HepG2 (cell line): ENCODE measurements at regions of chr18 and their contacts with region 1.

Region 1: GRCh38 chr18:21740724-21741510 is at the start of gene MIB1:
- DNase-seq: no peak
- ATAC-seq: peak; percentile 86
- H3K4me3 ChIP-seq: peak within 1 kb of the TSS; percentile 93 to 98 (median 94)
- H3K27ac ChIP-seq: peak within 1 kb of the TSS; percentile 97
- H3K4me1 ChIP-seq: peaks cover 47% of the 10 kb centered on the region
- H3K27me3 ChIP-seq: no peaks in the 10 kb centered on the region
- CTCF ChIP-seq: no peak
- EP300 ChIP-seq: no peak
- POLR2A ChIP-seq: peak; percentile 55 to 70
- RAD21 ChIP-seq: no peak
- total RNA-seq, gene MIB1: 47.0 and 60.6 TPM in 2 replicates

Region 2: DNA sequence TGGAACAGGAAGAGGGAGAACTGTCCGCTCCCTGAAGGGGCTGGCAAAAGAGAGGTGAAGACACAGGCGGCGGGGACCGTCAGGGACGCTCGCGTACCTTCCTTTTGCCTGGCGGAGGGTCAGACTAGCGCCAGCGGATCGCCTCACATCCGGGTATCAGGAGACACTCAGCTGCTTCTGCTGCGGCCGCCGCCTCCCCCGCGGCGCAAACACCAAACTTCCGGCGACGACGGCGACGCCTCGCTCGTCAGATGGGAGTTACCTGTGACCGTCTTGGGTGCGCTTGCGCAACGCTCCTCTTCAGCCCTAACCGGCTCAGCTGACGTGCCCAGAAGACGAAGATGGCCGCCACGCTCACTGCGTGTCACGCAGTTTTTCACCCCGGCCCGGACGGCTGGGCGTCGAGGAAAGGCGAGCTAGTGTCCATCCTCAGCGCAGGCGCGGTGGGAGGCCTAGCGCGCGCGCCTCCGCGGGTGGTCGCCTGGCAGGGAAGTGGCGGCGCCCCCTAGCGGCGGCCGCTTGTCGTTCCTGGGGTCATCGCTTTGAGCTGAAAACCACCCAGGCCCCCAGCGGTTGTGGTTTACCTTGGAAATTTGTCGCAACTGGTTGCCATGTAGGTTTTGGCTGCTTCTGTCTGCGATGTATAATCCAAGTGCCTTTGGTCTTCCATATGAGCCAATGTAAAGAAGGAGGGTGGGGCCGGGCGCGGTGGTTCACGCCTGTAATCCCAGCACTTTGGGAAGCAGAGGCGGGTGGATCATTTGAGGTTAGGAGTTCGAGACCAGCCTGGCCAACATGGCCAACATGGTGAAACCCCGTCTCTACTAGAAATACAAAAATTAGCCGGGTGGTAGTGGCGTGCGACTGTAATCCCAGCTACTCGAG is 140.1 kb before region 1 on chr18 and contains the start of gene ESCO1:
- CTCF ChIA-PET with region 1: no interaction called
- POLR2A ChIA-PET with region 1: interaction called, 16 read pairs
- in situ Hi-C with region 1: no loop called
- intact Hi-C with region 1: no loop called
- DNase-seq: peak; percentile 96
- ATAC-seq: peak; percentile 88
- H3K4me3 ChIP-seq: peak within 1 kb of the TSS; percentile 87 to 95 (median 95)
- H3K27ac ChIP-seq: peak within 1 kb of the TSS; percentile 100
- H3K4me1 ChIP-seq: peaks cover 43% of the 10 kb centered on the region
- H3K27me3 ChIP-seq: no peaks in the 10 kb centered on the region; a peak in 1 of 5 replicates
- CTCF ChIP-seq: peak; percentile 97
- EP300 ChIP-seq: peak; percentile 4 to 50; a peak in 2 of 4 replicates
- POLR2A ChIP-seq: peak; percentile 88 to 95
- RAD21 ChIP-seq: peak; percentile 79
- total RNA-seq, gene ESCO1: 19.4 and 32.7 TPM in 2 replicates

Region 3: DNA sequence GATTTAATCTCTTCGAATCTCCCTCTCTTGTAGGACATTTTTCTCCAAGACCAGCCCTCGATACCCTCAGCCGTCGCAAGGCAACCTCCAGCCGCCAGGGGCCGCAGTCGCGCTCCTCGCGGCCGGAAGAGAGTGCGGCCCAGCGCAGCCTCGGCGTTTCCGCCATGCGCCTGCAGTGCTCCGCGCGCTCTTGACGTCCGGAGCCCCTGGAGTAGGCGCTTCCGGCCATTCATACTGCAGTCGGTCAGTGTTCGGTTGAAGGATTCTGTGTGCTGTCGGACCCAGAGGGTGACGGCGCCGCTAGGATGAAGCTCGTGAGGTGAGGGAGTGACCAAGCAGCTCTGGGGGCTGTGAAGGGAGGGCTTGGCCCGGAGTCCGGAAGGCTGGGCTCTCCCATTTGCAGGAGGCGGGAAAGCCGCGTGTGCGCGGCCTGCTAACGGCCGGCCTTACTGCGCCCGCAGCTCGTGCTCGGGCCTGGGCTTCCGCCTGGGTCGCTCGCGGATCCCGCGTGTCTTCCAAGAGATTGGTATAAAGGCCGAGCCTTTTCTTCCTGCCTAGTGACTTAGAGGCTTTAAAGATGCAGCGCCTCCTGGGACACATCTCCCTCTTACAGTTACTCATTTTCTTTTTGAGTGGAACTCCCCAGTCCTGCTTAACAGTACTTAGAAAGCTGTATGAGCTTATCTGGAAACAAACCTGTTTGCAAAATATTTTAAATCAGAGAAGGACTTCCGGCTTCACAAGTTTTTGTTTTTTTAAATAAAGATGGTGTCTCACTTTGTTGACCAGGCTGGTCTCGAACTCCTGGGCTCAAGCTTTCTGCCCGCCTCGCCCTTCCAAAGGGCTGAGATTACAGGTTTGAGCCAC is 128.6 kb before region 1 on chr18 and contains the start of gene SNRPD1:
- CTCF ChIA-PET with region 1: no interaction called
- POLR2A ChIA-PET with region 1: interaction called, 10 read pairs
- in situ Hi-C with region 1: no loop called
- intact Hi-C with region 1: loop called (anchors 5 kb)
- DNase-seq: peak; percentile 86
- ATAC-seq: peak; percentile 99
- H3K4me3 ChIP-seq: peak within 1 kb of the TSS; percentile 67 to 84 (median 81)
- H3K27ac ChIP-seq: peak within 1 kb of the TSS; percentile 93
- H3K4me1 ChIP-seq: peaks cover 31% of the 10 kb centered on the region
- H3K27me3 ChIP-seq: no peaks in the 10 kb centered on the region; a peak in 1 of 5 replicates
- CTCF ChIP-seq: peak; percentile 99
- EP300 ChIP-seq: 0 out of 4 replicates have a peak, but pooled peaks of 1 of the 2 experiments have one; percentile 53
- POLR2A ChIP-seq: peak; percentile 89 to 90
- RAD21 ChIP-seq: peak; percentile 64
- total RNA-seq, gene SNRPD1: 275 and 478 TPM in 2 replicates

Region 4: GRCh38 chr18:21638822-21639221 is 102.1 kb before region 1 on chr18:
- CTCF ChIA-PET with region 1: no interaction called
- POLR2A ChIA-PET with region 1: no interaction called
- in situ Hi-C with region 1: no loop called
- intact Hi-C with region 1: loop called (anchors 2 kb)
- DNase-seq: no peak
- ATAC-seq: no peak
- H3K4me3 ChIP-seq: no peak overlapping the region
- H3K27ac ChIP-seq: no peak overlapping the region
- H3K4me1 ChIP-seq: peaks cover 23% of the 10 kb centered on the region
- H3K27me3 ChIP-seq: no peaks in the 10 kb centered on the region
- CTCF ChIP-seq: no peak
- EP300 ChIP-seq: no peak
- POLR2A ChIP-seq: no peak
- RAD21 ChIP-seq: no peak

Region 5: DNA sequence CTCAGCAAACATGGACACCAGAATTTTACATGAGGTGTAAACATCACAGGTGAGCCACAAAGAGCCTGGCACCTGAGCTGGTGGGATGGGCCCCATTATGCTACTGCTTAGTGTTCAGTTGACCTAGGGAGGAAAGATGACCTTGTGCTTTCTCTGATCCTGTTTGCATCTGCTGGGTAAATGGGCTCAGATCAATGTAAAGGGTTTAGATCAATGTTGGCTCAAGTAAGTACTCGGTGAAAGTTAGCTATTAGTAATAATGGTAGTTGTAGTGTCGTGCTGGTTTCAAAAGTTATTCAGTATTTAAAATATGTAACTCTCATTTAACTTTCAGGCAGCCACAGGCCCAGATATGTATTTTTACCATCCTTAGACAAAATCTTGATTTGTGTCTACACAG is 56.2 kb before region 1 on chr18:
- CTCF ChIA-PET with region 1: no interaction called
- POLR2A ChIA-PET with region 1: interaction called, 11 read pairs
- in situ Hi-C with region 1: no loop called
- intact Hi-C with region 1: loop called (anchors 5 kb)
- DNase-seq: peak; percentile 60
- ATAC-seq: peak; percentile 65
- H3K4me3 ChIP-seq: no peak overlapping the region
- H3K27ac ChIP-seq: peak overlapping the region; percentile 92
- H3K4me1 ChIP-seq: peaks cover 58% of the 10 kb centered on the region
- H3K27me3 ChIP-seq: no peaks in the 10 kb centered on the region
- CTCF ChIP-seq: no peak
- EP300 ChIP-seq: peak in 1 of 2 experiments; percentile 70; a peak in 2 of 4 replicates
- POLR2A ChIP-seq: no peak
- RAD21 ChIP-seq: no peak

Region 6: GRCh38 chr18:21704603-21705364 is 36.1 kb before region 1 on chr18 and contains the start of gene ABHD3:
- CTCF ChIA-PET with region 1: no interaction called
- POLR2A ChIA-PET with region 1: interaction called, 17 read pairs
- in situ Hi-C with region 1: no loop called
- intact Hi-C with region 1: loop called (anchors 2 kb)
- DNase-seq: peak; percentile 78
- ATAC-seq: peak; percentile 98
- H3K4me3 ChIP-seq: peak within 1 kb of the TSS; percentile 76 to 90 (median 85)
- H3K27ac ChIP-seq: peak within 1 kb of the TSS; percentile 89
- H3K4me1 ChIP-seq: peaks cover 44% of the 10 kb centered on the region
- H3K27me3 ChIP-seq: no peaks in the 10 kb centered on the region
- CTCF ChIP-seq: peak; percentile 37; the same call in 1 of the 2 replicates
- EP300 ChIP-seq: peak in 1 of 2 experiments; percentile 28; a peak in 1 of 4 replicates
- POLR2A ChIP-seq: peak; percentile 84 to 94
- RAD21 ChIP-seq: peak; percentile 42
- total RNA-seq, gene ABHD3: 14.2 and 32.1 TPM in 2 replicates

Region 7: GRCh38 chr18:21914739-21915319 is 173.9 kb after region 1 on chr18:
- CTCF ChIA-PET with region 1: no interaction called
- POLR2A ChIA-PET with region 1: no interaction called
- in situ Hi-C with region 1: no loop called
- intact Hi-C with region 1: no loop called
- DNase-seq: peak; percentile 53
- ATAC-seq: peak; percentile 74
- H3K4me3 ChIP-seq: no peak overlapping the region
- H3K27ac ChIP-seq: no peak overlapping the region
- H3K4me1 ChIP-seq: no peaks in the 10 kb centered on the region
- H3K27me3 ChIP-seq: no peaks in the 10 kb centered on the region; a peak in 1 of 5 replicates
- CTCF ChIP-seq: peak; percentile 75
- EP300 ChIP-seq: no peak
- POLR2A ChIP-seq: no peak
- RAD21 ChIP-seq: peak; percentile 70; the same call in 1 of the 2 replicates